CD14-positive monocyte (primary cell): ENCODE measurements at regions of chr6 and their contacts with region 1.

Region 1: GRCh38 chr6:127366281-127367022 is 23.0 kb upstream of the ECHDC1 start:
- DNase-seq: peak; percentile 70 to 93 (median 82)
- H3K4me3 ChIP-seq: no peak overlapping the region
- H3K4me3 Mint-ChIP-seq: peak overlapping the region; percentile 3 to 7
- H3K27ac ChIP-seq: peak overlapping the region in 1 of 2 donors; percentile 29
- H3K27ac Mint-ChIP-seq: peak overlapping the region; percentile 58 to 89 (median 82)
- H3K4me1 ChIP-seq: peaks cover 10 to 13% of the 10 kb centered on the region in 2 donors
- H3K4me1 Mint-ChIP-seq: peaks cover 13% of the 10 kb centered on the region
- H3K27me3 ChIP-seq: no peaks in the 10 kb centered on the region
- H3K27me3 Mint-ChIP-seq: peaks cover 0 to 1% (median 0%) of the 10 kb centered on the region in 3 donors
- CTCF ChIP-seq: no peak

Region 2: DNA sequence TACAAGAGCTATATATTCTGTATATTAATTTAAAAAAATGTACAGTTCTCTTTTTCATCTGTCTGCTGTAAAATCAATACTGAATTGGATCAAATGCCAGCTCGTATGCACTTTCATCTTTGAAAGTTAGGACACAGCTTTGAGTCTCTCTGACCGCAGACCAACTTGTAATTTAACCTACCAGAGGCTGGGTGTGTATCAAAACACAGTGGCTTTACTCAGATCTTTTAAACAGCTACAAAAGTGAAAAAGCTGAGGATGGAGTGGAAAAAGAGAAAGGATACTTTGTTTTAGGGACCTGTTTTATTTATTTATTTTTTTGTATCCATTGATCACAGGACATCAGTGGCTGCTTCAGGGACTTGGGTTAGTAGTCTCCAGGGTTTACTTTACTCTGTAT is 48.6 kb after region 1 on chr6:
- intact Hi-C with region 1: loop called in 1 of 2 experiments (anchors 10 kb)
- DNase-seq: no peak
- H3K4me3 ChIP-seq: no peak overlapping the region
- H3K4me3 Mint-ChIP-seq: no peak overlapping the region
- H3K27ac ChIP-seq: no peak overlapping the region
- H3K27ac Mint-ChIP-seq: no peak overlapping the region
- H3K4me1 ChIP-seq: no peaks in the 10 kb centered on the region
- H3K4me1 Mint-ChIP-seq: no peaks in the 10 kb centered on the region
- H3K27me3 ChIP-seq: no peaks in the 10 kb centered on the region
- H3K27me3 Mint-ChIP-seq: peaks cover 0 to 1% (median 0%) of the 10 kb centered on the region in 3 donors
- CTCF ChIP-seq: no peak

Region 3: GRCh38 chr6:127748290-127748689 is 381.8 kb after region 1 on chr6:
- intact Hi-C with region 1: no loop called
- DNase-seq: no peak
- H3K4me3 ChIP-seq: no peak overlapping the region
- H3K4me3 Mint-ChIP-seq: no peak overlapping the region
- H3K27ac ChIP-seq: no peak overlapping the region
- H3K27ac Mint-ChIP-seq: no peak overlapping the region
- H3K4me1 ChIP-seq: no peaks in the 10 kb centered on the region
- H3K4me1 Mint-ChIP-seq: no peaks in the 10 kb centered on the region
- H3K27me3 ChIP-seq: no peaks in the 10 kb centered on the region
- H3K27me3 Mint-ChIP-seq: no peaks in the 10 kb centered on the region
- CTCF ChIP-seq: no peak

Region 4: DNA sequence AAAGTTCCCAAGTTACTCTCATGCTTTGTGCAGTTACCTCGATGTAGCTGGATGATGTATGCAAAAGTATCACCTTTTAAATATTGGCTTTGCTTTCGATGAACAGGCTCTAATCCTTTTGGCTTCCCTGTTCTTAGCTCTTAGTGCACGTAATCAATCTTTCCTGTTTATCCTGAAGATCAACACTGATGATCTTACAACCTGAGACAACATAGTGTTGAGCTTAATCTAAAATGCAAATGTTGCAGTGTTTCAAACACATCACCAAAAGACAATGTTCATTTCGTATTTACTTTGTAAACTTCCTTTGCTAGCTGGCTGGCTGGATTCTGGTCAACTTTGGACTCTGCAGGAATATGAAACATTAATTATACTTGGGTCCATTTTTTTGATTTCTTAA is 402.3 kb after region 1 on chr6:
- intact Hi-C with region 1: no loop called
- DNase-seq: no peak
- H3K4me3 ChIP-seq: no peak overlapping the region
- H3K4me3 Mint-ChIP-seq: no peak overlapping the region
- H3K27ac ChIP-seq: no peak overlapping the region
- H3K27ac Mint-ChIP-seq: no peak overlapping the region
- H3K4me1 ChIP-seq: no peaks in the 10 kb centered on the region
- H3K4me1 Mint-ChIP-seq: no peaks in the 10 kb centered on the region
- H3K27me3 ChIP-seq: no peaks in the 10 kb centered on the region
- H3K27me3 Mint-ChIP-seq: peaks cover 0 to 2% (median 0%) of the 10 kb centered on the region in 3 donors
- CTCF ChIP-seq: no peak